ENCODE measurements at regions of chr6 and their contacts with region 1.

Region 1: DNA sequence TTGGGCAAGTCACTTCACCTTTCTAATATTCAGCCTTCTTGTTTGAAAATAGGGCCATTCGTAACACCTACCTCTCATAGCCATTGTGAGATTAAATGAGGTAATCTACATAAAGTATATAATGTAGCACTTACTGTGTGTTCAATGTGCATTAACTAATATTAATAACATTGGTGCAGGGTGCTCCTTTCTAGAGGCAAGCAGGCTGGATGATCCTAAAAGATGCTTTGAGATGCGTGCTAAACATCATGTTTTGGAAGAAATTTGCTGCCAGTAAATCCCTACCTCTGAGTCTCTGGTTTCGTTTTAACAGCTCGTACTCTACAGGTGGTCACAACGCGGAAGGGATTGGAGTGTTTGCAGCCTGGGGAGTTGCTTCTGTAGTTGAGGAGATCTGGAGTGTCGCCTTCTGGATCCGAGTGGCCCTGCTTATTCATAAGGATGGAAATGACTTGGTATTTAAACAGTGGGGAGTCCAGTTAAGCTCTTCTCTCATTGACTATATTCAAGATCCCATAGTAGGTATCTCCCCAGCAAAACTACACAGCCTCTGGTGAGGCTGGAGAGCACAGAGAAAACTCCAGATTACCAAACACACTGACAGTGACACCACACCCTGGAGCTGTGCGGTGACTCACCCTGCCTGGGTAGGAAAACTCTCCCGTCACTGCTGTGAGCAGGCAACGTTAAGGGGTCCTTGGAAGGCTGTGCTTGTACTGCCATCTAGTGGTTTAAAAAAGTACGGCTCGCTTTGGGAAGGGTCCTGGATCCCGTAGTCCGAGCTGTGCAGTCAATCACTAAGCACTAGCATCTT is 107.9 kb downstream of the MAP3K7 start:
- DNase-seq: peak; percentile 88
- ATAC-seq: peak; percentile 95
- H3K4me3 ChIP-seq: peak overlapping the region in 1 of 5 experiments; percentile 25
- H3K4me3 Mint-ChIP-seq: peak overlapping the region; percentile 49
- H3K27ac ChIP-seq: no peak overlapping the region
- H3K27ac Mint-ChIP-seq: peak overlapping the region; percentile 51
- H3K4me1 ChIP-seq: peaks cover 11 to 13% of the 10 kb centered on the region in 2 donors
- H3K4me1 Mint-ChIP-seq: peaks cover 17% of the 10 kb centered on the region
- H3K27me3 ChIP-seq: no peaks in the 10 kb centered on the region
- H3K27me3 Mint-ChIP-seq: no peaks in the 10 kb centered on the region
- CTCF ChIP-seq: peak; percentile 94

Region 2: GRCh38 chr6:89819336-89820130 is 659.5 kb before region 1 on chr6 and contains the start of gene MDN1:
- CTCF ChIA-PET with region 1: interaction called, 18 read pairs
- POLR2A ChIA-PET with region 1: no interaction called
- intact Hi-C with region 1: loop called (anchors 10 kb)
- DNase-seq: peak; percentile 93
- ATAC-seq: peak; percentile 91
- H3K4me3 ChIP-seq: peak within 1 kb of the TSS; percentile 41 to 99 (median 89)
- H3K4me3 Mint-ChIP-seq: peak within 1 kb of the TSS; percentile 98
- H3K27ac ChIP-seq: peak within 1 kb of the TSS; percentile 80 to 85
- H3K27ac Mint-ChIP-seq: peak within 1 kb of the TSS; percentile 96
- H3K4me1 ChIP-seq: peaks cover 24 to 32% of the 10 kb centered on the region in 2 donors
- H3K4me1 Mint-ChIP-seq: peaks cover 29% of the 10 kb centered on the region
- H3K27me3 ChIP-seq: no peaks in the 10 kb centered on the region
- H3K27me3 Mint-ChIP-seq: no peaks in the 10 kb centered on the region
- CTCF ChIP-seq: no peak
- total RNA-seq, gene MDN1: 59.5 and 66.6 TPM in 2 replicates

Region 3: DNA sequence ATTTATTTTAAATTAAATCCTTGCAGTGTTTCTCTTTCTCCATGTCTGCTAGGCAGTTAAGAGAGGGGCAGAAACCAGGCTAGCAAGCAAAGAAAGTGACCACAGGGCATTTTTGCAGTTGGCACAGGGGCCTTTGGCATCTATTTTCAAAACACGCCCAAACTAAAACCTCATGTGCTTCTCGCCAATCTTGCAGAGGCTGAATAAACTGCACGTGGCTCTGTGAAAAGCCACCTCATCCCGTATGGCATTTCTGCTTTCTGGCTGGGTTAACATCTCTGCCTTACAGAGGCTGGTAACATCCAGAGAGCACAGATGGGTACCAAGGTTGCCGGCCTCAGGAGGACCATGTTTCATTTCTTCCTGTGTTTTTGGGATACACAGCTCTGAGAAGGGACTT is 530.1 kb before region 1 on chr6:
- CTCF ChIA-PET with region 1: interaction called, 206 read pairs
- POLR2A ChIA-PET with region 1: no interaction called
- intact Hi-C with region 1: no loop called
- DNase-seq: no peak
- ATAC-seq: no peak
- H3K4me3 ChIP-seq: no peak overlapping the region
- H3K4me3 Mint-ChIP-seq: no peak overlapping the region
- H3K27ac ChIP-seq: no peak overlapping the region
- H3K27ac Mint-ChIP-seq: no peak overlapping the region
- H3K4me1 ChIP-seq: peaks cover 9 to 11% of the 10 kb centered on the region in 2 donors
- H3K4me1 Mint-ChIP-seq: peaks cover 27% of the 10 kb centered on the region
- H3K27me3 ChIP-seq: no peaks in the 10 kb centered on the region
- H3K27me3 Mint-ChIP-seq: no peaks in the 10 kb centered on the region
- CTCF ChIP-seq: no peak

Region 4: DNA sequence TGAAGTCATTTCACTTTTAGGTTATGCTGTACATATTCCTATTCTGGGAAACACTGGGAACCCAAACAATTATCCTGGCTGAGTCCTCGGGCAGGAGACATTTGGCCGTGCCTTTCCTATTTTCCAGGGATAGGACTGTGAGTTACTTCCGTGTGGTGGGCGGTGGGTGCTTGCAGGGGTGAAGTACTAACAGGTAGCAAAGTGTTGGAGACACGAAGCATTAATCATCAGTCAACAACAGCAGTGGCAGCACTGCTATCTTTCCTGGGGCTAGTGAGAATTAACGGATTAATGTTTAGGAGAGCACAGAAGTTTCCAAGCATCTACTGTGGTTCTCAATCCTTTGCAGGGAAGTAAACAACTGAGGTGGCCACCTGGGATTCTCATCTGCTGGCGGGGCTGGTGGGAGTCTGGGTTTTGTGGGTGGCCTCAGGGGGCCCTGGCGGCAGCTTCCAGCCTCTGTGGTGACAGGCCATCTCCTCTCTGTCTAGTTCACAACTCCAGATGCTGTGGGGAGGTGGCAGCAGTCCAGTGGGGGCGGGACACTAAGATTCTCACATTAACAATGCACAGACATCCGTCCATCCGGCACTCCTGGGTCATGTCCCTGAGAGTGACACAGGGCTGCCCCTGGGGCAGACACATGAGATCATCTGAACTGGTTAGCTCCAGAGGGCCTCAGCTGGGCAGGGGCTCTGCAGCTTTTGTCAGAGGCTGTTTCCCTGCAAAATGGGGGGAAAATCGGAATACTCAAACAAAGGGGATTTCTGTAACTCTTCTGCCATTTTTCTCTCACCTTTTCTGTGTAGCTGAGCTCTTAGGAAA is 493.9 kb before region 1 on chr6:
- CTCF ChIA-PET with region 1: interaction called, 13 read pairs
- POLR2A ChIA-PET with region 1: no interaction called
- intact Hi-C with region 1: no loop called
- DNase-seq: no peak
- ATAC-seq: no peak
- H3K4me3 ChIP-seq: no peak overlapping the region
- H3K4me3 Mint-ChIP-seq: no peak overlapping the region
- H3K27ac ChIP-seq: peak overlapping the region in 1 of 2 donors; percentile 52
- H3K27ac Mint-ChIP-seq: peak overlapping the region; percentile 32
- H3K4me1 ChIP-seq: peaks cover 0 to 3% of the 10 kb centered on the region in 2 donors
- H3K4me1 Mint-ChIP-seq: peaks cover 16% of the 10 kb centered on the region
- H3K27me3 ChIP-seq: no peaks in the 10 kb centered on the region
- H3K27me3 Mint-ChIP-seq: no peaks in the 10 kb centered on the region
- CTCF ChIP-seq: no peak

Region 5: GRCh38 chr6:90216072-90216977 is 262.7 kb before region 1 on chr6:
- CTCF ChIA-PET with region 1: interaction called, 14 read pairs
- POLR2A ChIA-PET with region 1: interaction called, 3 read pairs
- intact Hi-C with region 1: loop called (anchors 1 kb)
- DNase-seq: peak; percentile 95
- ATAC-seq: peak; percentile 84
- H3K4me3 ChIP-seq: no peak overlapping the region
- H3K4me3 Mint-ChIP-seq: peak overlapping the region; percentile 73
- H3K27ac ChIP-seq: peak overlapping the region; percentile 85 to 96
- H3K27ac Mint-ChIP-seq: no peak overlapping the region
- H3K4me1 ChIP-seq: peaks cover 83 to 84% of the 10 kb centered on the region in 2 donors
- H3K4me1 Mint-ChIP-seq: peaks cover 28% of the 10 kb centered on the region
- H3K27me3 ChIP-seq: no peaks in the 10 kb centered on the region
- H3K27me3 Mint-ChIP-seq: no peaks in the 10 kb centered on the region
- CTCF ChIP-seq: peak; percentile 63

Region 6: GRCh38 chr6:90393232-90393884 is 85.6 kb before region 1 on chr6:
- CTCF ChIA-PET with region 1: interaction called, 21 read pairs
- POLR2A ChIA-PET with region 1: no interaction called
- intact Hi-C with region 1: loop called (anchors 1 kb)
- DNase-seq: peak; percentile 89
- ATAC-seq: peak; percentile 68
- H3K4me3 ChIP-seq: peak overlapping the region in 1 of 5 experiments; percentile 9
- H3K4me3 Mint-ChIP-seq: peak overlapping the region; percentile 63
- H3K27ac ChIP-seq: peak overlapping the region; percentile 42 to 60
- H3K27ac Mint-ChIP-seq: peak overlapping the region; percentile 77
- H3K4me1 ChIP-seq: peaks cover 37 to 44% of the 10 kb centered on the region in 2 donors
- H3K4me1 Mint-ChIP-seq: peaks cover 49% of the 10 kb centered on the region
- H3K27me3 ChIP-seq: no peaks in the 10 kb centered on the region
- H3K27me3 Mint-ChIP-seq: no peaks in the 10 kb centered on the region
- CTCF ChIP-seq: peak; percentile 85

Region 7: GRCh38 chr6:90493332-90493731 is 14.3 kb after region 1 on chr6:
- CTCF ChIA-PET with region 1: interaction called, 13 read pairs
- POLR2A ChIA-PET with region 1: no interaction called
- intact Hi-C with region 1: no loop called
- DNase-seq: no peak
- ATAC-seq: no peak
- H3K4me3 ChIP-seq: no peak overlapping the region
- H3K4me3 Mint-ChIP-seq: no peak overlapping the region
- H3K27ac ChIP-seq: no peak overlapping the region
- H3K27ac Mint-ChIP-seq: no peak overlapping the region
- H3K4me1 ChIP-seq: no peaks in the 10 kb centered on the region
- H3K4me1 Mint-ChIP-seq: no peaks in the 10 kb centered on the region
- H3K27me3 ChIP-seq: no peaks in the 10 kb centered on the region
- H3K27me3 Mint-ChIP-seq: peaks cover 34% of the 10 kb centered on the region
- CTCF ChIP-seq: no peak

Measured in B cell (primary cell).